Heart right ventricle (tissue), 16 donors: ENCODE measurements at regions of chrX and their contacts with region 1.

Region 1: GRCh38 chrX:16695079-16695676 is 17.3 kb downstream of the CTPS2 start:
- DNase-seq: peak; percentile 27 to 28
- ATAC-seq: peak in 4 of 8 donors; percentile 28 to 66 (median 36)
- H3K4me3 ChIP-seq: no peak overlapping the region
- H3K27ac ChIP-seq: no peak overlapping the region
- H3K4me1 ChIP-seq: no peaks in the 10 kb centered on the region
- H3K27me3 ChIP-seq: peaks cover 0 to 20% (median 0%) of the 10 kb centered on the region in 7 donors
- CTCF ChIP-seq: peak; percentile 47 to 92 (median 74)

Region 2: GRCh38 chrX:15761564-15762191 is 933.5 kb before region 1 on chrX:
- intact Hi-C with region 1: loop called in 1 of 10 experiments (anchors 10 kb)
- DNase-seq: no peak
- ATAC-seq: peak in 1 of 8 donors; percentile 64
- H3K4me3 ChIP-seq: no peak overlapping the region
- H3K27ac ChIP-seq: no peak overlapping the region
- H3K4me1 ChIP-seq: peaks cover 0 to 4% (median 0%) of the 10 kb centered on the region in 9 donors
- H3K27me3 ChIP-seq: no peaks in the 10 kb centered on the region
- CTCF ChIP-seq: peak; percentile 15 to 87 (median 61)